Heart left ventricle (tissue), 16 donors: ENCODE measurements at regions of chr3 and their contacts with region 1.

Region 1: DNA sequence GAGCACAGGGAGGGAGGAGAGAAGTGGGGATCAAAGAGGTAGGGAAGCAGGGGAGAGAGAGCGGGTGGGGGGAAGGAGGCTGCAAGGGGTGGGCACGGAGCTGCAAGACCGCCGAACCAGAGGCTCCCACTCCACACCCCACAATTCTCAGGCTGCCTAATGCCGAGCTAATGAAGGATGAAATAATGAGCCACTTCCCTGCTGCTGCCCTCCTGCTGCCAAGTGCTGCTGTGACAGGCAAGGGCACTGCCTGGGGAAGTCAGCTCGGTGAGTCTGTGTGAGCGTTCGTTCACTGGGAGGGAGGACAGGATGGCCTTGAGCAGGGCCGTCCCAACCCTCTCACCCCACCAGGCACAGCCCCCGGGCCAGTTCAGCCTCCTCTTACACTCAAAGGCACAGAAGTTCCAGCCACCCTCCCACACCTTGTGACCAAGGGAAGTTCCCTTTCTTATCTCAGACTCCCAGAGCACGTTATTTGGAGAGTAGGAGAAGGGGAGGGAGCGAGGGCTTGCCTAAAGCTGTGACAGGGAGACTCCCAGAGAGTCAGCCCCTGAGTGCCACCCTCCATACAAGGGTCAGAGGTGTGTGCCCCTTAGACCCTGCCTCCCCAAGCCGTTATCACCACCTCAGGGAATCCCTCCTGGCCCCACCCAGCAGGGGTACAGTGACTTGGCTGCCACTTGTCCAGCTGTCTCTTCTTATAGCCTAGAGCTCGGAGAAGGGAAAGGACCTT is 12.4 kb downstream of the GLYCTK start:
- DNase-seq: peak; percentile 56 to 81 (median 70)
- ATAC-seq: peak; percentile 82 to 94 (median 88)
- H3K4me3 ChIP-seq: peak overlapping the region in 1 of 12 donors; percentile 10
- H3K27ac ChIP-seq: peak overlapping the region in 11 of 12 donors; percentile 9 to 74 (median 54)
- H3K4me1 ChIP-seq: peaks cover 0 to 28% (median 14%) of the 10 kb centered on the region in 12 donors
- H3K27me3 ChIP-seq: no peaks in the 10 kb centered on the region
- CTCF ChIP-seq: peak in 6 of 12 donors; percentile 22 to 50 (median 32)
- POLR2A ChIP-seq: no peak

Region 2: GRCh38 chr3:52333869-52334557 is 34.0 kb after region 1 on chr3:
- intact Hi-C with region 1: loop called in 1 of 10 experiments (anchors 5 kb)
- DNase-seq: peak in 1 of 5 donors; percentile 2
- ATAC-seq: no peak
- H3K4me3 ChIP-seq: no peak overlapping the region
- H3K27ac ChIP-seq: no peak overlapping the region
- H3K4me1 ChIP-seq: peaks cover 0 to 10% (median 0%) of the 10 kb centered on the region in 12 donors
- H3K27me3 ChIP-seq: no peaks in the 10 kb centered on the region
- CTCF ChIP-seq: no peak
- POLR2A ChIP-seq: no peak

Region 3: GRCh38 chr3:52385157-52385556 is 85.1 kb after region 1 on chr3:
- intact Hi-C with region 1: loop called in 1 of 10 experiments (anchors 10 kb)
- DNase-seq: no peak
- ATAC-seq: no peak
- H3K4me3 ChIP-seq: no peak overlapping the region
- H3K27ac ChIP-seq: no peak overlapping the region
- H3K4me1 ChIP-seq: no peaks in the 10 kb centered on the region
- H3K27me3 ChIP-seq: no peaks in the 10 kb centered on the region
- CTCF ChIP-seq: peak in 2 of 12 donors; percentile 20 to 29
- POLR2A ChIP-seq: no peak